Activated CD4-positive, alpha-beta memory T cell treated with anti-CD3 and anti-CD28 coated beads, Interleukin-2, amount 10 ng/mL, durations not matched to agents 7 days and 5 days (primary cell): ENCODE measurements at regions of chr14 and their contacts with region 1.

Region 1: DNA sequence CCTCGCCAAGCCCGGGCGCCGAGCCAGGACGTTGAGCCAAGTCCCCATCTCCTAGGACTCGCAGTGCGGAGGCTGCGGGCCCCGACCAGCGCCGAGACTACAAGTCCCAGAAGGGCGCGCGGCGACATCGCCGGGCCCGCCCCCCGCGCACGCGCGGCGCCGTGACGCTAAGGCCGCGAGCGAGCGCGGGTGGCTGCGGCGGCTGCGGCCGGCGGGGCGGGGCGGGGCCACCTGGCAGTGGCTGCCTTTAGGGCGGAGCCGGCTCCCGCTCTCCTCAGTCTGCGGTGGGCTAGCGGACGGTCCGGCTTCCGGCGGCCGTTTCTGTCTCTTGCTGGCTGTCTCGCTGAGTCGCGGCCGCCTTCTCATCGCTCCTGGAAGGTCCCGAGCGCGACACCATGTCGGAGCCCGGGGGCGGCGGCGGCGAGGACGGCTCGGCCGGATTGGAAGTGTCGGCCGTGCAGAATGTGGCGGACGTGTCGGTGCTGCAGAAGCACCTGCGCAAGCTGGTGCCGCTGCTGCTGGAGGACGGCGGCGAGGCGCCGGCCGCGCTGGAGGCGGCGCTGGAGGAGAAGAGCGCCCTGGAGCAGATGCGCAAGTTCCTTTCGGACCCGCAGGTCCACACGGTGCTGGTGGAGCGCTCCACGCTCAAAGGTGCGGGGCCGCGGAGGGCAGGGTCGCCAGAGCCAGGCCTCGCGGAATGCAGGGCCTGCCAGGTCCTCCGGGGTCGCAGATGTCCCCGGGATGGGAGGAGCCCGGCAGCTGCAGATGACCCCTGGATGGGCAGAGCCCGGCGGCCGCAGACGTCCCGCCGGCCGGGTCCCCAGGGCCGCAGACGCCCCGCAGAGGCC is at the start of gene DYNC1H1:
- DNase-seq: peak; percentile 92
- H3K4me3 Mint-ChIP-seq: peak within 1 kb of the TSS; percentile 92
- H3K27ac Mint-ChIP-seq: peak within 1 kb of the TSS; percentile 89
- H3K4me1 Mint-ChIP-seq: peaks cover 43% of the 10 kb centered on the region
- H3K27me3 Mint-ChIP-seq: peaks cover 4% of the 10 kb centered on the region
- total RNA-seq, gene DYNC1H1: 223 to 241 TPM

Region 2: GRCh38 chr14:101947906-101948665 is 16.4 kb before region 1 on chr14:
- CTCF ChIA-PET with region 1: interaction called, 24 read pairs
- POLR2A ChIA-PET with region 1: interaction called, 28 read pairs
- DNase-seq: peak; percentile 100
- H3K4me3 Mint-ChIP-seq: peak overlapping the region; percentile 89
- H3K27ac Mint-ChIP-seq: peak overlapping the region; percentile 85
- H3K4me1 Mint-ChIP-seq: peaks cover 26% of the 10 kb centered on the region
- H3K27me3 Mint-ChIP-seq: peaks cover 18% of the 10 kb centered on the region

Region 3: GRCh38 chr14:102028421-102029172 is 64.1 kb after region 1 on chr14:
- CTCF ChIA-PET with region 1: no interaction called
- POLR2A ChIA-PET with region 1: no interaction called
- DNase-seq: no peak
- H3K4me3 Mint-ChIP-seq: no peak overlapping the region
- H3K27ac Mint-ChIP-seq: no peak overlapping the region
- H3K4me1 Mint-ChIP-seq: peaks cover 2% of the 10 kb centered on the region
- H3K27me3 Mint-ChIP-seq: no peaks in the 10 kb centered on the region